ENCODE measurements at regions of chr2 and their contacts with region 1.

Region 1: DNA sequence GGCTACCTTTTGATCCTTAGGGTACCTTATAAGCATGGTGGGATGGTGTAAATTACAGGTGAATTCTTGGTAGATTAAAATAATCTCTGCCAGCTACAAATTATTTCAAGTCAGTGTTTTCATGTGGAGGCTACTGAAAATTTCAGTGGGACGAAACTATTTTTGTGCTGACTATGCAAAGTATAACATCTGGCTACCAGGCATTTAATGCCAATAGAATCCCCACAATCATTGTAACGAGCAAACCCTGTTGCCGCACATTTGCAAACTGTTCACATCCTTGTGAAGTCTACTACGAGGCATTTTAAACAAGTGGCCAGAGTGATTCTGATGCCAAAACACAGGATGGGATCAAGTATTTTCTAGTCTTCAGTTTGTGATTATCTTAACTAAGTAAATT is 48.1 kb upstream of the SDC1 start:
- H3K4me3 Mint-ChIP-seq: no peak overlapping the region
- H3K27ac Mint-ChIP-seq: no peak overlapping the region
- H3K4me1 Mint-ChIP-seq: no peaks in the 10 kb centered on the region
- H3K27me3 Mint-ChIP-seq: no peaks in the 10 kb centered on the region

Region 2: DNA sequence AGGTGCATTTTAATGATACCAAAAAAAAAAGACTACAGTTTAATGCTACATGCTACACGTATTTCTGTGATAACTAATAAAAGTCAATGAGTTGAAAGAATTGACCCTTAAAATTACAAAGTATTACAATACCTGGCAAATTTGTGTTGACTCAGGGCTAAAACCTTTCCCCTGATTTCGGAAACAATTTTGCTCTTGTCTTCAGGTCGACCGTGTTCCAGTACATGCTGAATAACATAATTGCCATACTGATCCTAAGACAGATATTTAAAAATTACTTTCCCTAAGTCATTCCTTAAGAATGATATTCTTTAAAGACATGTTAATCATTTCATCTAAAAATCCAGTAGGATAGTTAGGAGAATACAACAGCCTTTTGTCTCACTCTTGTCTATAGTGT is 18.3 kb before region 1 on chr2:
- intact Hi-C with region 1: no loop called
- H3K4me3 Mint-ChIP-seq: no peak overlapping the region
- H3K27ac Mint-ChIP-seq: no peak overlapping the region
- H3K4me1 Mint-ChIP-seq: no peaks in the 10 kb centered on the region
- H3K27me3 Mint-ChIP-seq: no peaks in the 10 kb centered on the region

Region 3: GRCh38 chr2:20313659-20314058 is 40.6 kb after region 1 on chr2:
- intact Hi-C with region 1: loop called (anchors 5 kb)
- H3K4me3 Mint-ChIP-seq: no peak overlapping the region
- H3K27ac Mint-ChIP-seq: no peak overlapping the region
- H3K4me1 Mint-ChIP-seq: no peaks in the 10 kb centered on the region
- H3K27me3 Mint-ChIP-seq: no peaks in the 10 kb centered on the region

Region 4: GRCh38 chr2:20525041-20526035 is 252.3 kb after region 1 on chr2:
- intact Hi-C with region 1: no loop called
- H3K4me3 Mint-ChIP-seq: no peak overlapping the region
- H3K27ac Mint-ChIP-seq: no peak overlapping the region
- H3K4me1 Mint-ChIP-seq: no peaks in the 10 kb centered on the region
- H3K27me3 Mint-ChIP-seq: peaks cover 10% of the 10 kb centered on the region